ENCODE measurements at regions of chr19 and their contacts with region 1.

Region 1: GRCh38 chr19:23321948-23322549 is 71.9 kb upstream of the ZNF724 start:
- DNase-seq: no peak
- H3K4me3 ChIP-seq: no peak overlapping the region
- H3K27ac ChIP-seq: no peak overlapping the region
- H3K4me1 ChIP-seq: no peaks in the 10 kb centered on the region
- H3K27me3 ChIP-seq: no peaks in the 10 kb centered on the region
- CTCF ChIP-seq: no peak
- EP300 ChIP-seq: no peak
- POLR2A ChIP-seq: no peak

Region 2: DNA sequence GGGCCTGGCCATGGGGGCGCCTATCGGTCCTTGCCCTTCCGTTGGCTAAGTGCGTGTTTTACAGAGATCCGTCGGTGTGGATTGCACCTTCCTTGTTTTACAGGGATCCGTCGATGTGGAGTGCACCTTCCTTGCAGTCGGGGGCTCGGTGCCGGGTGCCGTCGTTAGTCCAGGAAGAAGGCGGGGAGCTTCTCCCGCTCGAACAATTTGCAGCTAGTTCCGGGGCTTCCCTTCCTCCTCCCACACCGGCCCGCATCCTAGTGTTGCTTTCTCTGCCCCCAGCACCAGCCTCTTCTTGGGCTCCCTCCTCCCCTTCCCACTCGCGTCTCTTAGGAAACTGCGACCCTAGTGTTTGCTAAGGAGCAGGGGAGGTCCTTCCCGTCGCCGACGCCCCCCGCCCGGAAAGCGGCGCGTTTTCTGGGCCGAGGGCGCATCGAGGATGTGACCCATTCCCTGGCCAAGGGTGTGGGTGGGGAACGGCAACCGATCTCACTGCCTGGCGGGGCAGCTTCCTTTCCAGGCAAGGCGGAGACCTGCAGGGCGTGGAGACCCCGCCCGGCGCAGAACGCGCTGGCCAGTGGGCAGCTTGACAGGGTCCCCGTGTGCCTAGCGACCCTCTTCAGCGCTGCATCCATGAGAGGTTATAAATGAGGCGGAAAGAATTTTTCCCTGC is 149.0 kb after region 1 on chr19:
- intact Hi-C with region 1: loop called in 3 of 4 experiments (anchors 1 to 5 kb)
- DNase-seq: no peak
- H3K4me3 ChIP-seq: no peak overlapping the region
- H3K27ac ChIP-seq: no peak overlapping the region
- H3K4me1 ChIP-seq: no peaks in the 10 kb centered on the region
- H3K27me3 ChIP-seq: no peaks in the 10 kb centered on the region
- CTCF ChIP-seq: no peak
- EP300 ChIP-seq: no peak
- POLR2A ChIP-seq: no peak

Region 3: DNA sequence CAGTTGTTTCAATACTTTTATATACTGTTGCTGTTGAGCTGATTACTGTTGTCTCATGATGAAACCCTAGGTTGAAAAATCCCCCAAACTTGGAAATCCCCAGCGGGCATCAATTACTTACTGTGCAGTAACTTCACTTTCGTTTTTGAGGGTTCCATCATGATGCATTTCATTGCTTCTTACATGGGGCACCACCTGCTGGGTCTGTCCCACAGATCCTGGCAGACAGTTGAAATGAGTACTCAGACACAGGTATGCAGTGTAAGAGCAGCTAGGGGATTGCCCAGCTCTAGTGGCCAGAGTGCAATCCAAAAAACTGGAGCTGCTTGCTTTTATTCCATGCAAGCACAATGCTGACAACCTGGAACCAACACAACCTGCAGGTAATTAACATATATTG is 205.7 kb after region 1 on chr19:
- intact Hi-C with region 1: no loop called
- DNase-seq: no peak
- H3K4me3 ChIP-seq: no peak overlapping the region
- H3K27ac ChIP-seq: no peak overlapping the region
- H3K4me1 ChIP-seq: no peaks in the 10 kb centered on the region
- H3K27me3 ChIP-seq: no peaks in the 10 kb centered on the region
- CTCF ChIP-seq: no peak
- EP300 ChIP-seq: no peak
- POLR2A ChIP-seq: no peak